GM23248 (cell line): ENCODE measurements at regions of chr20 and their contacts with region 1.

Region 1: GRCh38 chr20:47389867-47390347 is 33.4 kb upstream of the ZMYND8 start:
- DNase-seq: peak; percentile 77
- H3K4me3 ChIP-seq: no peak overlapping the region
- H3K27ac ChIP-seq: peak overlapping the region; percentile 55
- H3K4me1 ChIP-seq: peaks cover 13% of the 10 kb centered on the region
- H3K27me3 ChIP-seq: no peaks in the 10 kb centered on the region

Region 2: DNA sequence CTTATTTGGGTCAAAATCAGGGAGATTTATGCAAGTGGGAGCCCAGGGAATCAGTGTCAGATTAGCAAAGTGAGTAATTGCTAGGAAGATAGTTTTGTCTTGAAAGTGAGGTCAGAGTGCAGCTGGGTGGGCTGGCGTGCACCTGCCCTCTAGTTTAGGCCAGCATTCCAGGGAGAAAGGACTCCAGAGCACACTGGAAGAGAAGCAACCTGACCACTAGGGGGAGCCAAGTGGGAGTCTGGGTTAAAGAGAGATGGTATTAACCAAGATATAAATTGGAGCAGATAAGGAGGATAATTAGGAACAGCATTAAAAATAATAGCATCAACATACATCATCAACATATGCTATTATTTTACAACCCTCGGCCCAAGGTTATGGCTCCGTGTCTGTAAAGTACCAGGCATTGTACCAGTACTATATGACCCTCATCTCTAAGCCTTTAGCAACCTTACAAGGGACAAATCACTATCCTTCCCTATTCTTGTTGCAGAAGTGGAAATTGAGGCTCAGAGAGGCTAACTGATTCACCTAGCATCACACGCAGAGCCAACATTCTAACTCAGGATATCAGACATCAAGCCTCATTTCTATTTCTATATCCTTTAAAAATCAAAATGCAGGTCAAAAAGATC is 622.7 kb before region 1 on chr20:
- in situ Hi-C with region 1: loop called (anchors 10 kb)
- DNase-seq: peak; percentile 62
- H3K4me3 ChIP-seq: no peak overlapping the region
- H3K27ac ChIP-seq: no peak overlapping the region
- H3K4me1 ChIP-seq: no peaks in the 10 kb centered on the region
- H3K27me3 ChIP-seq: peaks cover 12% of the 10 kb centered on the region; the same call in 1 of the 2 replicates

Region 3: DNA sequence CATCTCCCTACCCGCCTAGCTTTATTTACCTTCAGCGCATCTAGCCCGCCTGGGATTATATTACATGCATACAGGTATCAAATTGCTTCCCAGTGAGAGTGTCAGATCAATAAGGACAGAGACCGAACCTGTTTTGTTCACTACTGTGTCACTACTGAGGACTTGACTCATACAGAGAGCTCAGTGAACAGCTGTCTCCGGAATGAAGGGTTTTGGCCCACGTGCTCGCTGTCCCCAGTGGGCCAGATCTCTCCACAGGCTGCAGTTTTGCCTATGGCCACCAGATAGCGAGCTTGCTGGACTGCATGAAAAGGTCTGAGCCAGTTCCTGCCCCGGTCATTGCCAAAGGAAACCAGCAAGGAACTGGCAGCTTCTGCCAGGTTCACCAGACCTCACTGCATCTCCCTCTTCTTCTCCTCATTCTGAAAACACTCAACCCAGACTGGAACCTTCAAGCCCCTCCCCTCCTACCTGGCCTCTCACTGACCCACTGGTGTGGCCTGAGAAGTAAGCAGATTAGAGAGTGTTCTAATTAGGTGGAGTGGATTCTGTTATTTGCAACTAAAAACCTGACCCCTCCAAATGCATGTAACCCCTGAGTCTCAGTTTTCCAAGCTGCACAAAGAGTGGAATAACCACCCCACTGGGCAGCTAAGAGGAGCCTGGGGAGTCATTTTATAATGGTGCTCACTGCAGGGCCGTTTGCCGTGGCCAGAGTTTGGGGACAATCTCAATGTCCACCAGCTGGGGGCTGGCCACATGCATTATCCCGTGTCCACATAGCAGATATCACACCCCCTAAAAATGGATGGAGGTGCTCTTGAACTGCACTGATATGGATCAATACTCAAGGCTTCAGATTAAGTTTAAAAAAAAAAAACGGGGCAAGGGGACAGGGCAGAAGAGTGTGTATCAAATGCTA is 184.1 kb before region 1 on chr20:
- in situ Hi-C with region 1: loop called (anchors 10 kb)
- DNase-seq: peak; percentile 84
- H3K4me3 ChIP-seq: no peak overlapping the region
- H3K27ac ChIP-seq: no peak overlapping the region
- H3K4me1 ChIP-seq: peaks cover 4% of the 10 kb centered on the region
- H3K27me3 ChIP-seq: no peaks in the 10 kb centered on the region

Region 4: DNA sequence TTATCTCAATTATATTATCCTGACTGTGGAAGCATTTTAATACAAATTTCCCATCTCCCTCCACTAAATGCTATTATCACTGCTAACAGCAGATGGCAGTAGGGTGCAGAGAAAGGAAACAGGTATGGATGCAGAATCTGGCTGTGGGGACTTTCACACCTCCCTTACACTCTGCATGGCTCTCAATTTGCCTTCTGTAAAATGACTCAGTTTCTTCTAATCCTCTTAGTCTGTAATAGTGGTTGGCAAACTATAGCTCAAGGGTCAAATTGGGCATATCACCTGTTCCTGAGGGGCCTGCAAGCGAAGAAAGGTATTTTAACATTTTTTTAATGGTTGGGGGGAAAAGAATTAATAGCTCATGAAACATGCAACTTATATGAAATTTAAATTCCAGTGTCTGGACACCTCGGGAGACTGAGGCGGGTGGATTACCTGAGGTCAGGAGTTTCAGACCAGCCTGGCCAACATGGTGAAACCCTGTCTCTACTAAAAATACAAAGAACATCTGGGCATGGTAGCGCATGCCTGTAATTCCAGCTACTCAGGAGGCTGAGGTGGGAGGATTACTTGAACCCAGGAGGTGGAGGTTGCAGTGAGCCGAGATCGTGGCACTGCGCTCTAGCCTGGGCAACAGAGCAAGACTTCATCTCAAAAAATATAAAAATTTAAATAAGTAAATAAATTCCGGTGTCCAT is 116.9 kb before region 1 on chr20:
- in situ Hi-C with region 1: loop called (anchors 10 kb)
- DNase-seq: peak; percentile 78
- H3K4me3 ChIP-seq: no peak overlapping the region
- H3K27ac ChIP-seq: peak overlapping the region; percentile 87
- H3K4me1 ChIP-seq: peaks cover 68% of the 10 kb centered on the region
- H3K27me3 ChIP-seq: no peaks in the 10 kb centered on the region

Region 5: GRCh38 chr20:47620808-47621805 is 231.2 kb after region 1 on chr20:
- in situ Hi-C with region 1: loop called (anchors 10 kb)
- DNase-seq: peak; percentile 82
- H3K4me3 ChIP-seq: no peak overlapping the region
- H3K27ac ChIP-seq: peak overlapping the region; percentile 19; the same call in 1 of the 2 replicates
- H3K4me1 ChIP-seq: peaks cover 7% of the 10 kb centered on the region; the same call in 1 of the 2 replicates
- H3K27me3 ChIP-seq: no peaks in the 10 kb centered on the region